Astrocyte of the spinal cord (primary cell): ENCODE measurements at regions of chr10 and their contacts with region 1.

Region 1: DNA sequence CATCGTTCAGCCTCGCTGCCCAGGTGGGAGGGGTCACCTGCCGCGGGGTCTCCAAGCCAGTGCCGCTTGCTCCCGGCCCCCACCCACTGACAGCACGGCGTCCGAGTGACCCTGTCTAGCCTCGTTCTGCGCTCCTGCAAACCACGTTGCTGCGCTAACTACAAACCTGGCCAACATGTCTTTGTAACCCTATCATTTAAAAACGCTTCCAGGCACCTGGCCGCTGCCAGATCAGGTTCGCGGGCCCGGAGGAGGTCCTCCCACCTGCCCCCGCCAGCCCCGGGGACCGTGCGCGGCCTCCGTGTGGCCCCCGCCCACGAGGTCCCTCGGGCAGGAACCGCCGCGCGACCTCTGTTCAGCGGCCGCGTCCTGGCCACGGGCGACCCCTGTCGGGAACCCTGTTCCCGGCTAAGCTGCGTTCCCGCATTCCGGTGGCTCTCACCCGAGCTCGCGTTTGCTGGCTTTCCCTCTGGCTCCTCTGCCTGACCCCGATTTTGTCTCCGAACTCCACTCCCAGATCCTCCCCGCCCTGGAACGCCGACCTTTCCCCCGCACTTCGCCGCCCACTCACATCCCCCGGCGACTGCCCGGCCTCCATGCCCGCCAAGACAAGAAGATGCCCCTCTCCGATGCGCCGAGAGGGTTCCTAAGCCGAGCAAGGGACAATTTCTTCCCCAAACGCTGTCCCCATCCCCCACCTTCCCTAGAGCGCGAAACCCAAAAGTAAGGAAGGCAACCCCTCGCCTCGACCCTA is 2.4 kb downstream of the SFMBT2 start:
- DNase-seq: peak; percentile 41
- H3K4me3 ChIP-seq: peak overlapping the region; percentile 65
- CTCF ChIP-seq: peak; percentile 65

Region 2: DNA sequence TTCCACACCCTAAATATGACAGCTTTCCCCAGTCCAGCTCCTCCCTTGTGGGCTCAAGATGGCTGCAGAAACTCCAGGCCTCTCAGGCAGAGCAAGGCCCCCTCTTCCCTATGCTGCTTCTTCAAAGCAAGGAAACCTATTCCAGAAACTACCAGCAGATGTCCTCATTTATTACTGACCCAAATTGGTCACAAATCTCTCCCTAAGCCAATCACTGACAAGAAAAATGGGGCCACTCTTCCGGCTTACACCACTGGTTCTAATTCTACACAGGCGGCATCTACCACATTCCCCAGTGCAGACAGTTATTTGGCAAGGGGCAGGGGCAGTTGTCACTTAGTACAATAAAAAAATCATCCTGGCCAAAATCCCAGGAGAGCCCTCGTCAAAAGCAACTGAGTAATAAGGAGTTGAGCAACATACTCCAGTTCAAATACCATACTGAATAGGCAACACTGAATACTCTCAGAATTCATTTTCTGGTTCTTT is 148.0 kb before region 1 on chr10:
- in situ Hi-C with region 1: loop called (anchors 10 kb)
- DNase-seq: peak; percentile 93
- H3K4me3 ChIP-seq: no peak overlapping the region
- CTCF ChIP-seq: peak; percentile 71

Region 3: DNA sequence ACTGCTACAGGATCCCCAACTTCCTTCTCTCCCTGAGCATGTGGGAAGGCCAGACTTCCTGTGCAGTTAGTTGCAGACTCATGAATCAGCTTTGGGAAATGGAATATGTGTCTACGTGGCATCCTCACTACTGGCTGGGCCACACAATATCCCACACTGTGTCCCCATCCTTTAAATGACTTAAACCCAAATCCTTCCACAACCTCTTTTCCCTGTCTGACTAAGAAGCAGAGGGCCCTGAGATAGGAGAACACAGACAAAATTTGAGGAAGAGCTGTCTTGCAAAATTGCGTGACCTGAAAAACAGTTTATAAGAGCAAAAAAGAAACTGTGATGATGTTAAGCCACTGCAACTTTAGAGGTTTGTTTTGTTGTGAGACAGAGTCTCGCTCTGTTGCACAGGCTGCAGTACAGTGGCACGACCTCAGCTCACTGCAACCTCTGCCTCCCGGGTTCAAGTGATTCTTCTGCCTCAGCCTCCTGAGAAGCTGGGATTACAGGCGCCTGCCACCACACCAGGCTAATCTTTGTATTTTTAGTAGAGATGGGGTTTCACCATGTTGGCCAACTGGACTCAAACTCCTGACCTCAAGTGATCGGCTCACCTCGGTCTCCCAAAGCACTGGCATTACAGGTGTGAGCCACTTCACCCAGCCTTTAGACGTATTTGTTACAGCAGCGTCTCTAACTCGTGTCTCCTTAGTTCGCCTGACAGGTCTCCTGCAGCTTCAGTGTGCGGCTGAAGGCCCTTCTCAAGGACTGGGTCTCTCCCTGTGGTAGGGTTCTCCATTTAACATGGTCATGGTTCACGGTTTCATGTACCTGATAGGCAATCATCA is 49.2 kb after region 1 on chr10:
- in situ Hi-C with region 1: no loop called
- DNase-seq: no peak
- H3K4me3 ChIP-seq: no peak overlapping the region
- CTCF ChIP-seq: no peak